ENCODE measurements at regions of chr1 and their contacts with region 1.

Region 1: GRCh38 chr1:205750138-205751035 is at the start of gene NUCKS1:
- DNase-seq: peak; percentile 98
- ATAC-seq: peak; percentile 78
- H3K4me3 ChIP-seq: peak within 1 kb of the TSS; percentile 75 to 94
- H3K27ac ChIP-seq: peak within 1 kb of the TSS; percentile 92
- H3K4me1 ChIP-seq: peaks cover 20 to 43% of the 10 kb centered on the region in 2 experiments
- H3K27me3 ChIP-seq: no peaks in the 10 kb centered on the region
- CTCF ChIP-seq: no peak; a peak in 1 of 6 replicates
- POLR2A ChIP-seq: peak; percentile 41
- RAD21 ChIP-seq: no peak
- total RNA-seq, gene NUCKS1: 237 TPM

Region 2: GRCh38 chr1:205693421-205693991 is 56.9 kb before region 1 on chr1:
- CTCF ChIA-PET with region 1: no interaction called
- POLR2A ChIA-PET with region 1: no interaction called
- RAD21 ChIA-PET with region 1: no interaction called
- intact Hi-C with region 1: no loop called
- DNase-seq: no peak
- ATAC-seq: no peak
- H3K4me3 ChIP-seq: no peak overlapping the region
- H3K27ac ChIP-seq: no peak overlapping the region
- H3K4me1 ChIP-seq: no peaks in the 10 kb centered on the region
- H3K27me3 ChIP-seq: no peaks in the 10 kb centered on the region
- CTCF ChIP-seq: no peak
- POLR2A ChIP-seq: no peak
- RAD21 ChIP-seq: no peak

Region 3: GRCh38 chr1:205775015-205775716 is 24.8 kb after region 1 on chr1 and contains the start of gene RAB29:
- CTCF ChIA-PET with region 1: no interaction called
- POLR2A ChIA-PET with region 1: interaction called, 3 read pairs
- RAD21 ChIA-PET with region 1: no interaction called
- intact Hi-C with region 1: loop called (anchors 2 kb)
- DNase-seq: peak; percentile 50
- ATAC-seq: peak; percentile 99
- H3K4me3 ChIP-seq: peak within 1 kb of the TSS; percentile 79
- H3K27ac ChIP-seq: peak within 1 kb of the TSS; percentile 28; the same call in 1 of the 2 replicates
- H3K4me1 ChIP-seq: peaks cover 3 to 19% of the 10 kb centered on the region in 2 experiments; a peak in 3 of 4 replicates
- H3K27me3 ChIP-seq: no peaks in the 10 kb centered on the region
- CTCF ChIP-seq: no peak
- POLR2A ChIP-seq: no peak
- RAD21 ChIP-seq: no peak
- total RNA-seq, gene RAB29: 17.7 TPM

Region 4: DNA sequence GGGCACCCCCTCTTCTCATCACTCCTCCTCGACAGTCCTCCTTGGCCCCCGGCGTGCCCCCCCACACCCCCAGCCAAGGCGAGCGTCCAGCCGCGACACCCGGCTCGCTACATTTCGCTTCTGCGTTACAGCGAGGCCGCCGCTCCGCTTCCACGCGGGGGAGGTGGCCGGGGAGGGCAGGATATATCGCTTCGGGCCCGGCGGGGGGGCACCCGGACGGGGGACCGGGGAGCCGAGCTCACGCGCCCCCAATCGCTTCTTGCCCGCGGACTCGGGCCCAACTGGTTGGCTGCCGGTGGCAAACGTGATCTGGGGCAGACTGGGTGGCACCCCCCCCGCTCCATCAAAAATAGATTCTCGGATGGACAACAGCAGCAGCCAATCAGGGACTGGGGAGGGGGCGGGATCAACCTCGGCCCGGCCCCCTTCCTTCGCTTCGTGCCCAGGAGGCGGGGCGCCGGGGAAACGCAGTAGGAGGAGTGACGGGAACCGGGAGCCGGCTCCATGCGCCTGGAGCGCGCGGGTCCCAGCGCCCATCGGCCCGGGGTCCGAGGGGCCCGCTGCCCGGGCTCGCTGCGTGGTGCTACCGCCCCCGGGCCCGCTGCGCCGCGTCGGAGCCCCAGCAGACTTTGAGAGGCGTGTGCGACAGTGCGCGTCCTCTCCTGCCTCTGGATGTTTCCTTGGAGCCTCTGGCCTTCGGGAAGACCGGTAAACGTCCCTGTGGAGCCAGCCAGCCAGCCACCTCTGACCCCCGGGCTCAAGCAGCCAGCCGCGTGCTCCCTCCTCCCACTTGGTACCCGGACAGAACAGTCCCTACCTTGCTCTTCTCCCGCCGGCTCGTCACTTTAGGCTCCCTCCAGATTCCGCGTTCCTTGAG is 62.7 kb after region 1 on chr1 and contains the start of gene SLC41A1:
- CTCF ChIA-PET with region 1: no interaction called
- POLR2A ChIA-PET with region 1: no interaction called
- RAD21 ChIA-PET with region 1: no interaction called
- intact Hi-C with region 1: loop called (anchors 1 kb)
- DNase-seq: peak; percentile 76
- ATAC-seq: peak; percentile 93
- H3K4me3 ChIP-seq: peak within 1 kb of the TSS; percentile 64 to 72
- H3K27ac ChIP-seq: peak within 1 kb of the TSS; percentile 58
- H3K4me1 ChIP-seq: peaks cover 7 to 20% of the 10 kb centered on the region in 2 experiments; a peak in 3 of 4 replicates
- H3K27me3 ChIP-seq: no peaks in the 10 kb centered on the region
- CTCF ChIP-seq: no peak
- POLR2A ChIP-seq: peak; percentile 68
- RAD21 ChIP-seq: no peak
- total RNA-seq, gene SLC41A1: 35.9 TPM

Region 5: DNA sequence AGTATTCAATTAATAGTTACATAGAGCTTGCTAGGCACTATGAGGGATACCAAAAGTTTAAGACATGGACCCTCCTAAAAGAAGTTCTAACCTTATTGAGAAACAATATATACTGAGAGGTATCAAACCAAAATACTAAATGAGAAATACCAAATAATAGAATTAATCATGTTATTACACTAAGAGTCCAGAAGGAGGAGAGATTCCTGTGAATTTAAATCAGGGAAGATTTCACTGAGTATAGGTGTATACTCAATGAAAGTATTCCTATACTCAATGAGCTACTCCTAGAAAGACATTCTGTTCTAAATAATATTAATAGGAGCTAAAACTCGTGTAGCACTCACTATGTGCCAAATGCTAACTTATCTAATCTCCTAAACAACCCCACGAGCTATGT is 1903.9 kb after region 1 on chr1:
- CTCF ChIA-PET with region 1: no interaction called
- POLR2A ChIA-PET with region 1: no interaction called
- RAD21 ChIA-PET with region 1: no interaction called
- intact Hi-C with region 1: no loop called
- DNase-seq: no peak
- ATAC-seq: peak; percentile 62
- H3K4me3 ChIP-seq: no peak overlapping the region
- H3K27ac ChIP-seq: no peak overlapping the region
- H3K4me1 ChIP-seq: no peaks in the 10 kb centered on the region
- H3K27me3 ChIP-seq: no peaks in the 10 kb centered on the region
- CTCF ChIP-seq: peak; percentile 13 to 27 (median 22); a peak in 1 of 6 replicates
- POLR2A ChIP-seq: no peak
- RAD21 ChIP-seq: peak; percentile 24; the same call in 1 of the 2 replicates